OCI-LY7 (cell line): ENCODE measurements at regions of chr16 and their contacts with region 1.

Region 1: GRCh38 chr16:74657870-74658642 is 8.6 kb downstream of the RFWD3 start:
- DNase-seq: no peak
- H3K4me3 ChIP-seq: no peak overlapping the region
- H3K27ac ChIP-seq: no peak overlapping the region
- H3K4me1 ChIP-seq: peaks cover 37% of the 10 kb centered on the region
- CTCF ChIP-seq: no peak

Region 2: GRCh38 chr16:74438492-74439041 is 219.5 kb before region 1 on chr16:
- CTCF ChIA-PET with region 1: no interaction called
- POLR2A ChIA-PET with region 1: interaction called, 10 read pairs
- intact Hi-C with region 1: no loop called
- DNase-seq: no peak
- H3K4me3 ChIP-seq: no peak overlapping the region
- H3K27ac ChIP-seq: no peak overlapping the region
- H3K4me1 ChIP-seq: no peaks in the 10 kb centered on the region
- CTCF ChIP-seq: no peak

Region 3: GRCh38 chr16:74596586-74596985 is 61.5 kb before region 1 on chr16:
- CTCF ChIA-PET with region 1: no interaction called
- POLR2A ChIA-PET with region 1: no interaction called
- intact Hi-C with region 1: no loop called
- DNase-seq: no peak
- H3K4me3 ChIP-seq: no peak overlapping the region
- H3K27ac ChIP-seq: no peak overlapping the region
- H3K4me1 ChIP-seq: peaks cover 2% of the 10 kb centered on the region
- CTCF ChIP-seq: no peak

Region 4: DNA sequence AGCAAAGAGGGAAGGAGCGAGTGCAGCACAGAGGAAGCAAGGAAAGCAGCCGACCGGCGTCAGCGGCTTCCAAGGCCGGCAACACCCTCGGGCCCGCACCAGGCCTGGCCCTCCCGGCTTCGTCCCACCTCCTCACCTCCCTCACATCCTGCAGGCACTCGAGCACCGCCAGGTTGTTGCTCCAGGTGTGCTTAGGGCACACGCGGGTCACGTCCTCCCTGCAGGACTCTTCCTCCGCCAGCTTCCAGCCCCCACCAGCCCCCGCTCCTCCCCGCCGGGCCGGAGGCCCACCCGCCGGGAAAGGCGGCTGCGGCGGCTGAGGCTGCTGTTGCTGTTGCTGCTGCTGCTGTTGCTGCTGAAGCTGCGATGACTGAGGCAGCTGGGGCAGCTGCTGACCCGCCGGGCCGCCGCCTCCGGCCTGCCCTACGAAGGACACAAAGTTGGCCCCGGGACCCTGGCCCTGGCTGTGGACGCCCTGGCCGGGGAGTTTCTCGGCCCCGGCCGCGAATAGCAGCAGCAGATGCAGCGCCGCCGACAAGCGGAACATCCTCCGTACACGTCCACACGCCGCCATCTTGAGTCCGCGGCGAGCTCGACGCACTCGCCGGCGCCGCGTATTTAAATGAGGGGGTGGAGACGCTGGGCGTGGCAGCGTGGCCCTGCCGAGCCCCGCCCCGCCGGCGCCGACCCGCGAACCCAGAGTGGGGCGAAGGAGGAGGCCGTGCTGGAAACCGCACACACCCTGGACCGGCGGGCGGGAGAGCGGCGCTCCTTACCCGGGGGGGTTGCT is 51.3 kb before region 1 on chr16 and contains the start of gene GLG1:
- CTCF ChIA-PET with region 1: no interaction called
- POLR2A ChIA-PET with region 1: no interaction called
- intact Hi-C with region 1: no loop called
- DNase-seq: peak; percentile 95
- H3K4me3 ChIP-seq: peak within 1 kb of the TSS; percentile 86
- H3K27ac ChIP-seq: peak within 1 kb of the TSS; percentile 68
- H3K4me1 ChIP-seq: peaks cover 29% of the 10 kb centered on the region
- CTCF ChIP-seq: no peak
- total RNA-seq, gene GLG1: 40.4 and 57.8 TPM in 2 replicates

Region 5: GRCh38 chr16:74627506-74628220 is 30.4 kb before region 1 on chr16:
- CTCF ChIA-PET with region 1: no interaction called
- POLR2A ChIA-PET with region 1: no interaction called
- intact Hi-C with region 1: no loop called
- DNase-seq: no peak
- H3K4me3 ChIP-seq: no peak overlapping the region
- H3K27ac ChIP-seq: no peak overlapping the region
- H3K4me1 ChIP-seq: no peaks in the 10 kb centered on the region
- CTCF ChIP-seq: no peak

Region 6: DNA sequence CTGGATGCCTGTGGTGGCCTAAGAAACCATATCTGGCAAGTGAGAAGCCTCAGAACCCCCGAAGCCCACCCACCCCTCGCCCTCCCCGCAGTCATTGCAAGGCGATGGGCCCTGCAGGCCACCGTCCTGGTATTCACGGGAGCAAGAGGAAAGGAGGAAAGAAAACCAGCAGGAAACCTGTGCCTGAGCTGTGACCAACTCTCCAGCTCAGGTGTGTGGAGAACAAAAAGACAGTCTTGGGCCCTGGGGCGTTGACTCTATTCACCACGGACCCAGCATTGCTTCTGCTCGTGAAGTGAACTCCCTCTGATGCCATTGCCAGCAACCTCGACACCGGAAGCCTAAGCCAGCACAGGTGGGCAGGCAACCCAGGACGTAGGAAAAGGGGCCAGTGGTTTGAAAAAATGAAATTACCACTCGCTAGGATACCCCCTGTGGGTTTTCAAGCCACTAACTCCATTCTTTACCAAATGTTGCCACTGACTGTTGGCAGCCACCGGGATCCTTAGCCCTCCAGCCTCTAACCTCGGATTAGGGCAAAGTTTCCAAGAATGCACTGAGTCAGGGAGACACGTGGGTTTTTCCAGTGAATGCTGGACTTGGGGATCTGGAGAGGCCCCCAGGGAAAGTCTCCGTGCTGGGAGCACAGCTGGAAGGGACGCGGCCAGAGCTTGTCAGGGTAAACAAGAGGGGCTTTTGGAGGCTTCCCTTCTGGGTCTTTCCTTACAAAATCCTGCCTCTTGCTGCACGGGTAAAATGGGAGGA is 91.4 kb after region 1 on chr16:
- CTCF ChIA-PET with region 1: no interaction called
- POLR2A ChIA-PET with region 1: no interaction called
- intact Hi-C with region 1: no loop called
- DNase-seq: no peak
- H3K4me3 ChIP-seq: no peak overlapping the region
- H3K27ac ChIP-seq: no peak overlapping the region
- H3K4me1 ChIP-seq: no peaks in the 10 kb centered on the region
- CTCF ChIP-seq: no peak